Activated CD4-positive, alpha-beta T cell treated with anti-CD3 and anti-CD28 coated beads for 36 hours (primary cell): ENCODE measurements at regions of chr10 and their contacts with region 1.

Region 1: GRCh38 chr10:13371897-13372470 is 23.9 kb upstream of the SEPHS1 start:
- DNase-seq: peak; percentile 82
- ATAC-seq: peak; percentile 100
- H3K4me3 Mint-ChIP-seq: no peak overlapping the region
- H3K27ac Mint-ChIP-seq: no peak overlapping the region
- H3K4me1 Mint-ChIP-seq: no peaks in the 10 kb centered on the region
- H3K27me3 Mint-ChIP-seq: no peaks in the 10 kb centered on the region

Region 2: DNA sequence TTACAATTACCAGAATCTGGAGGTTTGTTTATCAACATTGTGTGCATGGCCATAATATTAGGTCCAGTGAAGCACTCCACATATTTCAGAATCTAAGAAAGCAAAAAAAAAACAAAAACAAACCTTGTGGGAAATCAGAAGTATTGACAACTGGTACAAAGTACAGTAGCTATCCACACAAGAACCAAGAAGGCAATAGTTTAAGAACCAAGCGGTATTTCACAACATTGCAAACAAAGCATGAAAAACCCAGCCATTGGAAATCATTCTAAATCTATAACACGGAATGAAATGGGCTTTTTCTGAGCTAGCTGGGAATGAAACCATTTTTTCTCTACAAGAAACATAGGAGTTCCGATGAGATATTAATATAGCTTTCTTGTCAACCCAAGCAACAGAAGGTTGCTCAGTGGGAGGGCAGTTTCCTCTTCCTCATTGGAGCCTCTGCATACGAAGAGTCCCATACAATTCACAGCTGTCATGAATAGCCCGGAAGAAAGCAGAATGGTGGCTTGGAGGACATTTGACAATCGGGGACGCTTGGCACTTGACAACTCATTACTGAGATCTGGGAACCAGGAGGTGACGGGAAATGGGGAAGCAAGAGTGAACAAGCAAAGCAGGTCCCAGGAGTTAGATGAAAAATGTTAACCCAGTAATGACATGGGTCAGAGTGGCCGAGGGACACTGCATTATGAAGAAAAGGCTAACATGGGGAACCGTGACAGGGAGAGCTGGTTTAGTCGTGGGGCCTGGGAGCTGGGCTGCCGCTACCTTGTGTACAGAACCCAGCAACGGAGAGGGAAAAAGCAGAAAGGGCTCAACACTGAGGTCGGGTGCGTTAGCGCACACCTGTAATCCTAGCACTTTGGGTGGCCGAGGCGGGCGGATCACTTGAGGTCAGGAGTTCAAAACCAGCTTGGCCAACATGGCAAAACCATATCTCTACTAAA is 79.9 kb before region 1 on chr10:
- CTCF ChIA-PET with region 1: no interaction called
- POLR2A ChIA-PET with region 1: no interaction called
- intact Hi-C with region 1: no loop called
- DNase-seq: no peak
- ATAC-seq: no peak
- H3K4me3 Mint-ChIP-seq: no peak overlapping the region
- H3K27ac Mint-ChIP-seq: no peak overlapping the region
- H3K4me1 Mint-ChIP-seq: peaks cover 6% of the 10 kb centered on the region
- H3K27me3 Mint-ChIP-seq: no peaks in the 10 kb centered on the region

Region 3: GRCh38 chr10:13388478-13389230 is 16.7 kb after region 1 on chr10:
- CTCF ChIA-PET with region 1: interaction called, 11 read pairs
- POLR2A ChIA-PET with region 1: no interaction called
- intact Hi-C with region 1: no loop called
- DNase-seq: no peak
- ATAC-seq: no peak
- H3K4me3 Mint-ChIP-seq: no peak overlapping the region
- H3K27ac Mint-ChIP-seq: no peak overlapping the region
- H3K4me1 Mint-ChIP-seq: no peaks in the 10 kb centered on the region
- H3K27me3 Mint-ChIP-seq: peaks cover 17% of the 10 kb centered on the region

Region 4: DNA sequence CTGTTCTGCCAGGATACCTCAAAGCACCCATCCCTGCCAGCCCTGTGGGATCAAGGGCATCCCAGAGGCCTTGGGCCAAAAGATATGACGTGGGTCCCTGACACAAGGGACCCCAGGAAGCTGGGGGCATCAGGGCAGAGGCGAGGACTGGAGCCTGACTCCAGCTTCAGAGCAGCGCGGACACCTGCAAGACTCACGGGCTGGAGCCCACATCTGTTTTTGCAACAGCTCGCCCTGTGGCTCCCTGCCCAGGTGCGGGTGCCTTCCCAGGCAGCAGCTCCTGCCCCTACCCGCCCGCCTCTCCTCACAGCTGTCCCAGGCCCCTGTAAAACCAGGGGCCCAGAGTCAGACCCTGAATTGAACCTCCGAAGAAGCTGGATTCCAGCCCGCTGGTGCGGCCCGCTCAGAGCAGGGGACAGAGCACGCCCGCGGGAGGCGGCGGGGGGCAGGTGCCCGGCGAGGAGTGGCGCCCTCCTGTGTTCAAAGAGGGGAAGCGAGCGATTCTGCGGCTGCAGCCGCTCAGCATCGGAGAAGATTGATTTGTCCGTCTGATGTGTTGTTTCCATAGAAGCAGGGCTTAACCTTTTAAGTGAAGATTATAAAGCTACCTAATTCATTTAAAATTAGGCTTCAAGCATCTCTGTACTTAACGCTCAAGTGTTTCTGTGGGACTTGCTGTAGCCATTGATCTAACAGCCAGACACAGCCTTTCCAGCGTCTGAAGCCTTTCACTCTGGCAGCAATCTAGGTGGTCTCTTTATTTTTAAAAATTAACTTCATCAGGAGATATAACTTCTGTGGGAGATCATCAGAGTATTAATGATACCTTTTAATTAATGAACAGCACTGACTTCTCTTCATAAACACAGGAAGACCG is 68.4 kb after region 1 on chr10:
- CTCF ChIA-PET with region 1: interaction called, 80 read pairs
- POLR2A ChIA-PET with region 1: no interaction called
- intact Hi-C with region 1: loop called (anchors 1 kb)
- DNase-seq: peak; percentile 83
- ATAC-seq: peak; percentile 90
- H3K4me3 Mint-ChIP-seq: peak overlapping the region; percentile 29
- H3K27ac Mint-ChIP-seq: no peak overlapping the region
- H3K4me1 Mint-ChIP-seq: peaks cover 17% of the 10 kb centered on the region
- H3K27me3 Mint-ChIP-seq: peaks cover 38% of the 10 kb centered on the region

Region 5: DNA sequence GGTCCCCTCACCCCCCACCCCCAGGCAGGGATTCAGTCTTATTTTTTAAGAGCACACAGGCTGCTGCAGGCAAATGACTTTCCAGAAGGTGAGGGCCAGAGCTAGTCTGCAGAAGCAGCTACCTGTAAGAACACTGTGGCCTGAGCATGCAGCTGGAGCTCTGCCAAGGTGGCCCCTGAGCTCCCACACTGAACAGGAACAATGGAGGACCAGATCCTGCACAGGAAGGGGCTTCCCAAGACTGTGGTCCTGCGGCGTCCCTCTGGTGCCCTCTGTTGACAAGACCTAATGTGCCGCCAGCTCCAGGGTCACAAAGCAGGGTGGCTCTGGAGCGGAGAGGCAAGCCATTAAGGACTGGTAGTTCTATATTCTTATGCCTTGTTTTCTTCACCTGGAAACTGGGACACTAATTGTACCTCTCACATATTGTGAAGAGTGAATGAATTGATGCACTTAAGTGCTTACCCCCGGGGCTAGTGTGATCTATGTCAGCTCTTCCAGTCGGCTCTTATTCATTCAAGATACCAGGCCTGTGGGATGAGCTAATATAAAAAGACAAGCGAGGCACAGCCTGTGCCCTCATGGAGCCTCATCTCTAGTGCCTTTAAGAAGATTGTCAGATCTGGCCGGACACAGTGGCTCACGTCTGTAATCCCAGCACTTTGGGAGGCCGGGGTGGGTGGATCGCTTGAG is 164.8 kb after region 1 on chr10:
- CTCF ChIA-PET with region 1: interaction called, 12 read pairs
- POLR2A ChIA-PET with region 1: no interaction called
- intact Hi-C with region 1: loop called (anchors 2 to 5 kb)
- DNase-seq: peak; percentile 66
- ATAC-seq: peak; percentile 76
- H3K4me3 Mint-ChIP-seq: no peak overlapping the region
- H3K27ac Mint-ChIP-seq: no peak overlapping the region
- H3K4me1 Mint-ChIP-seq: no peaks in the 10 kb centered on the region
- H3K27me3 Mint-ChIP-seq: peaks cover 47% of the 10 kb centered on the region

Region 6: DNA sequence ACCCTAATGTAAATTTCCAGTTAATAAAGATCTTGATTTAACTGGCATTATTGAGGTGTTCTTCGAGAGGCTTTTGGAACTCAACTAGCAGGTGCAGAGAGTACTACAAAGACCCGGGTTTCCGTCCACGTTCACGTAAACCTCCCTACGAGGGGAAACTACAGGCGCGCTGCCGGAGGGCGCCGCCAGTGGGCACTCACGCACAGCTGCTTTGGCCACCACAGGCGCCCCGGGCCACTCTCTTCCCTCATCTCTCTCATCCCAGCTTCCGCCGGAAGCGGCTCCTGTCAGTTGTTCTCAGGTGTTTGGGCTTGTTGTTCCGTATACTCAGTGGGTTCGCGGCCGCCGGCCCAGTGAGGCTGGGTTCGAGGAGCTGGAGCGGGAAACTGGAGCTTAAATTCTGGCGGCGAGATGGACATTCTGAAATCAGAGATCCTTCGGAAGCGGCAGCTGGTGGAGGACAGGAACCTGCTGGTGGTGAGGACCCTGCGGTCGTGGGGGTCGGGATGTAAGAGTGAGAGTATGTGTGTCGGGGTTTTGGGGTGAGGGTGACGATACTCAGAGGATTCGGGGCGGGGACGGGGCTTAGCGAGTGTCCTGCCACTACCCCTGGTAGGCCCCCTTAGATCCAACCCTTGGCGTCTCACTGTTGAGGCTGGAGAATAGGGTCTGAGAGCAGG is 214.8 kb after region 1 on chr10 and contains the start of gene PRPF18:
- CTCF ChIA-PET with region 1: interaction called, 9 read pairs
- POLR2A ChIA-PET with region 1: no interaction called
- intact Hi-C with region 1: loop called (anchors 1 kb)
- DNase-seq: peak; percentile 97
- ATAC-seq: peak; percentile 100
- H3K4me3 Mint-ChIP-seq: peak within 1 kb of the TSS; percentile 99
- H3K27ac Mint-ChIP-seq: peak within 1 kb of the TSS; percentile 95
- H3K4me1 Mint-ChIP-seq: peaks cover 29% of the 10 kb centered on the region
- H3K27me3 Mint-ChIP-seq: peaks cover 8% of the 10 kb centered on the region
- total RNA-seq, gene PRPF18: 21.0 to 22.1 TPM

Region 7: DNA sequence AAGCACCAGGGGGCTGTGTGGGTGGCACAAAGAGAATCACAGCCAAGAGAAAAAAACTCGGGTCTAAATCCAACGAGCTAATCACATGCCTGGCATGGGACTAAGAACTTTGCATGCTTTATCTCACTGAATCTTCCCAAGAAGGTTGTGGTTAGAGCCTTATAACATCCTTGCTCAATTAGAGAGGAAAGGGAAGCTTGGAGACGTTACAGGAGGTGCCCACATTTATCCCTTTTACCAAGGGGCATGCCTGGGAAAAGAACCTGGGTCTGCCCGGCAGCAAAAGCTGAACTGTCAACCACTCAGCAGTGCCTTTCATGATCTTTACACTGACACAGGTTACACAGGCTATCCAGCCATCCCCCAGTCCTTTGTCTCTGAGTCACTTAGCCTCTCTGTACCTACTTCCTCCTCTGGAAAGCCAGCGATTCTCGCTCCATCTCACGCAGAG is 404.9 kb after region 1 on chr10:
- CTCF ChIA-PET with region 1: interaction called, 6 read pairs
- POLR2A ChIA-PET with region 1: no interaction called
- intact Hi-C with region 1: loop called (anchors 1 kb)
- DNase-seq: no peak
- ATAC-seq: no peak
- H3K4me3 Mint-ChIP-seq: no peak overlapping the region
- H3K27ac Mint-ChIP-seq: no peak overlapping the region
- H3K4me1 Mint-ChIP-seq: peaks cover 3% of the 10 kb centered on the region
- H3K27me3 Mint-ChIP-seq: peaks cover 4% of the 10 kb centered on the region

Region 8: GRCh38 chr10:13795653-13796555 is 423.9 kb after region 1 on chr10:
- CTCF ChIA-PET with region 1: no interaction called
- POLR2A ChIA-PET with region 1: no interaction called
- intact Hi-C with region 1: no loop called
- DNase-seq: no peak
- ATAC-seq: no peak
- H3K4me3 Mint-ChIP-seq: no peak overlapping the region
- H3K27ac Mint-ChIP-seq: no peak overlapping the region
- H3K4me1 Mint-ChIP-seq: peaks cover 26% of the 10 kb centered on the region
- H3K27me3 Mint-ChIP-seq: no peaks in the 10 kb centered on the region